CD4-positive, alpha-beta memory T cell (primary cell): ENCODE measurements at regions of chr13 and their contacts with region 1.

Region 1: DNA sequence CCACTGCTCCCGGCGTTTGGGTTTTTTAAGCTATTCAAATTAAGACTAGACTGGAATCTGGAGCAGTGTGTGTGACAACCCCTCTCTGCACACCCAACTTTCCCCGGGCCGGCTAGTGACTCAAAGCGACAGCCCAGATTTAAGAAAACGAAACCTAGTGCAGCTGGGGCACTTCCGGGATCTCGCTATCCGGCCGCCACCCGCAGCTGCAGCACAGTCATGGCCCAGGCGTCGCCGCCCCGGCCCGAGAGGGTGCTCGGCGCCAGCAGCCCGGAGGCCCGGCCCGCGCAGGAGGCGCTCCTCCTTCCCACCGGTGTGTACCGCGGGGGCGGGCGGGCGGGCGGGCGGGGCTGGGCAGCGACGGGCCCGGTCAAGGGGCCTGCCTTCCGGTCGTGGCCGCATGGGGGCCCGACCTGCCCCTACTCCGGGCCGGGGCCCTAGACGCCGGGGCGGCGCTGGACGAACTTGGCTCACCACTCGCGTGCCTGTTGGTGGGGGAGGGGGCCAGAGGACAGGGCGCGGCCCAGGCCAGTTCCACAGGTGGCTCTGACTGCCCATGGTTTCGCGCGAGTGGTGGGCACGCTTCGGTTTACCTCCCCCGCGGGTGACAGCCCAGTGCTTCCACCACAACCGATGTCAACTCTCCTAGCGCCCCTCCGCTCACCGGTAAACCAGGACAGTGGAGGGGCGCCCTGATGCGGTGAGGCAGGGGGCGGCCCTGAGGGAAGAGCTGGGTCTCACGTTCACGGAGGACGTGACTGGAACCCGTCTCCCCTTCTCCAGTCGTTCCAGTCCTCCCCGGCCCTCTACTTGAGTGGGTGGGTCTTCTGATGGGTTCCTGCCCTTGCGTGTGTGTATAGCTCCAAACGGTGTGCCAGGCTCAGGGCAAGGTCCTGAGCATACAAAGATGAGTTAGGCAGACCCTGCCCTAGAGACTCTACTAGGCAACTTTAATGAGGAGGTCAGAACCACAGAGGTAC is at the start of gene PHF11:
- DNase-seq: peak; percentile 85 to 93 (median 87)
- H3K4me3 ChIP-seq: peak within 1 kb of the TSS; percentile 58 to 74
- H3K4me3 Mint-ChIP-seq: peak within 1 kb of the TSS; percentile 98 to 99 (median 98)
- H3K27ac ChIP-seq: peak within 1 kb of the TSS; percentile 94
- H3K27ac Mint-ChIP-seq: peak within 1 kb of the TSS; percentile 99
- H3K4me1 ChIP-seq: peaks cover 54% of the 10 kb centered on the region
- H3K4me1 Mint-ChIP-seq: peaks cover 40 to 64% (median 49%) of the 10 kb centered on the region in 4 donors
- H3K27me3 ChIP-seq: no peaks in the 10 kb centered on the region
- H3K27me3 Mint-ChIP-seq: no peaks in the 10 kb centered on the region
- total RNA-seq, gene PHF11: 138 to 139 TPM

Region 2: GRCh38 chr13:49225223-49226090 is 270.6 kb before region 1 on chr13:
- CTCF ChIA-PET with region 1: no interaction called
- POLR2A ChIA-PET with region 1: no interaction called
- intact Hi-C with region 1: no loop called
- DNase-seq: no peak
- H3K4me3 ChIP-seq: no peak overlapping the region
- H3K4me3 Mint-ChIP-seq: no peak overlapping the region
- H3K27ac ChIP-seq: no peak overlapping the region
- H3K27ac Mint-ChIP-seq: no peak overlapping the region
- H3K4me1 ChIP-seq: peaks cover 5% of the 10 kb centered on the region
- H3K4me1 Mint-ChIP-seq: peaks cover 0 to 9% (median 5%) of the 10 kb centered on the region in 4 donors
- H3K27me3 ChIP-seq: peaks cover 7% of the 10 kb centered on the region
- H3K27me3 Mint-ChIP-seq: peaks cover 21 to 29% of the 10 kb centered on the region in 2 donors

Region 3: GRCh38 chr13:49300739-49301589 is 195.1 kb before region 1 on chr13:
- CTCF ChIA-PET with region 1: interaction called, 3 read pairs
- POLR2A ChIA-PET with region 1: interaction called, 5 read pairs
- intact Hi-C with region 1: loop called (anchors 1 kb)
- DNase-seq: peak; percentile 77 to 79 (median 77)
- H3K4me3 ChIP-seq: peak overlapping the region; percentile 15 to 45
- H3K4me3 Mint-ChIP-seq: peak overlapping the region; percentile 70 to 85 (median 80)
- H3K27ac ChIP-seq: no peak overlapping the region
- H3K27ac Mint-ChIP-seq: peak overlapping the region in 6 of 7 donors; percentile 14 to 91 (median 74)
- H3K4me1 ChIP-seq: peaks cover 5% of the 10 kb centered on the region
- H3K4me1 Mint-ChIP-seq: peaks cover 6 to 14% (median 11%) of the 10 kb centered on the region in 4 donors
- H3K27me3 ChIP-seq: no peaks in the 10 kb centered on the region
- H3K27me3 Mint-ChIP-seq: no peaks in the 10 kb centered on the region

Region 4: GRCh38 chr13:49540552-49540951 is 44.5 kb after region 1 on chr13:
- CTCF ChIA-PET with region 1: no interaction called
- POLR2A ChIA-PET with region 1: interaction called, 15 read pairs
- intact Hi-C with region 1: loop called (anchors 5 kb)
- DNase-seq: peak in 3 of 5 donors; percentile 9 to 14 (median 10)
- H3K4me3 ChIP-seq: peak overlapping the region; percentile 3 to 36
- H3K4me3 Mint-ChIP-seq: peak overlapping the region; percentile 76 to 90 (median 83)
- H3K27ac ChIP-seq: peak overlapping the region; percentile 29
- H3K27ac Mint-ChIP-seq: peak overlapping the region; percentile 39 to 95 (median 87)
- H3K4me1 ChIP-seq: peaks cover 20% of the 10 kb centered on the region
- H3K4me1 Mint-ChIP-seq: peaks cover 16 to 19% (median 18%) of the 10 kb centered on the region in 4 donors
- H3K27me3 ChIP-seq: no peaks in the 10 kb centered on the region
- H3K27me3 Mint-ChIP-seq: no peaks in the 10 kb centered on the region

Region 5: GRCh38 chr13:49606747-49607648 is 110.9 kb after region 1 on chr13:
- CTCF ChIA-PET with region 1: interaction called, 5 read pairs
- POLR2A ChIA-PET with region 1: interaction called, 8 read pairs
- intact Hi-C with region 1: loop called (anchors 2 kb)
- DNase-seq: peak; percentile 72 to 78 (median 77)
- H3K4me3 ChIP-seq: peak overlapping the region in 1 of 2 donors; percentile 13
- H3K4me3 Mint-ChIP-seq: peak overlapping the region; percentile 82 to 95 (median 89)
- H3K27ac ChIP-seq: no peak overlapping the region
- H3K27ac Mint-ChIP-seq: peak overlapping the region in 6 of 7 donors; percentile 22 to 95 (median 72)
- H3K4me1 ChIP-seq: no peaks in the 10 kb centered on the region
- H3K4me1 Mint-ChIP-seq: peaks cover 2 to 5% (median 3%) of the 10 kb centered on the region in 4 donors
- H3K27me3 ChIP-seq: no peaks in the 10 kb centered on the region
- H3K27me3 Mint-ChIP-seq: no peaks in the 10 kb centered on the region

Region 6: GRCh38 chr13:49731766-49732165 is 235.7 kb after region 1 on chr13:
- CTCF ChIA-PET with region 1: no interaction called
- POLR2A ChIA-PET with region 1: no interaction called
- intact Hi-C with region 1: no loop called
- DNase-seq: no peak
- H3K4me3 ChIP-seq: no peak overlapping the region
- H3K4me3 Mint-ChIP-seq: no peak overlapping the region
- H3K27ac ChIP-seq: no peak overlapping the region
- H3K27ac Mint-ChIP-seq: no peak overlapping the region
- H3K4me1 ChIP-seq: no peaks in the 10 kb centered on the region
- H3K4me1 Mint-ChIP-seq: peaks cover 0 to 4% (median 2%) of the 10 kb centered on the region in 4 donors
- H3K27me3 ChIP-seq: no peaks in the 10 kb centered on the region
- H3K27me3 Mint-ChIP-seq: no peaks in the 10 kb centered on the region